MCF 10A (cell line): ENCODE measurements at regions of chr11 and their contacts with region 1.

Region 1: GRCh38 chr11:11028017-11028692 is 170.3 kb upstream of the ZBED5 start:
- DNase-seq: peak; percentile 74
- H3K4me3 Mint-ChIP-seq: no peak overlapping the region
- H3K27ac Mint-ChIP-seq: no peak overlapping the region
- H3K4me1 Mint-ChIP-seq: peaks cover 16% of the 10 kb centered on the region
- H3K27me3 Mint-ChIP-seq: no peaks in the 10 kb centered on the region
- CTCF ChIP-seq: peak; percentile 86

Region 2: DNA sequence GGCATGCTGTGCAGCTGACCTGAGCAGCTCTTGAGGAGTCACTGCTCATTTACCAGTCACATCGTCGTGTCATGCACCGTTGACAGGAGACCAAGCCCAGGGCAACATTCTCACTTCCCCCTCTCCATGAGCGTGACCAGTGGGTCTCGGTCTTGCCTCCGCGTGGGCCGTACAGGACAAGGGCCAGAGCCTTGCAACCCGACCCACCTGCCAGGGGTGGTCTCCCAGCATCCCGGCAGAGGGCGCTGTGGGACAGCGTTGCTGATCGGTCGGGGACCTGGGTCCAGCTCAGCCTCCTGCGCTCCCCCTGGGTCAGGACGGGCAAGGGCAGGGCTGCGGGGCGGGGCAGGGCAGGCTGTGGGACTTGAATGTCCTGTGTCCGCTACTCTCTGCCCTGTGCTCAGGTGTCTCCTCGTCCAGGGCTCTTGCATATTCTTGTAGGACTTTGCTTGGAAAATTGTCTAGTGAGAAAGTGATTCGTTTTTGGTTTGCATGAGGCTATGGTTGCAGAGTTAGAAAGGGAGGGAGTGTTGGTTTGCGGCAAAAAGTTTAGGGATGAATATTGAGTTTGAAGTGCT is 235.7 kb before region 1 on chr11:
- CTCF ChIA-PET with region 1: interaction called, 39 read pairs
- POLR2A ChIA-PET with region 1: interaction called, 4 read pairs
- intact Hi-C with region 1: no loop called
- DNase-seq: peak; percentile 88
- H3K4me3 Mint-ChIP-seq: no peak overlapping the region
- H3K27ac Mint-ChIP-seq: no peak overlapping the region
- H3K4me1 Mint-ChIP-seq: peaks cover 8% of the 10 kb centered on the region
- H3K27me3 Mint-ChIP-seq: no peaks in the 10 kb centered on the region
- CTCF ChIP-seq: peak; percentile 96

Region 3: DNA sequence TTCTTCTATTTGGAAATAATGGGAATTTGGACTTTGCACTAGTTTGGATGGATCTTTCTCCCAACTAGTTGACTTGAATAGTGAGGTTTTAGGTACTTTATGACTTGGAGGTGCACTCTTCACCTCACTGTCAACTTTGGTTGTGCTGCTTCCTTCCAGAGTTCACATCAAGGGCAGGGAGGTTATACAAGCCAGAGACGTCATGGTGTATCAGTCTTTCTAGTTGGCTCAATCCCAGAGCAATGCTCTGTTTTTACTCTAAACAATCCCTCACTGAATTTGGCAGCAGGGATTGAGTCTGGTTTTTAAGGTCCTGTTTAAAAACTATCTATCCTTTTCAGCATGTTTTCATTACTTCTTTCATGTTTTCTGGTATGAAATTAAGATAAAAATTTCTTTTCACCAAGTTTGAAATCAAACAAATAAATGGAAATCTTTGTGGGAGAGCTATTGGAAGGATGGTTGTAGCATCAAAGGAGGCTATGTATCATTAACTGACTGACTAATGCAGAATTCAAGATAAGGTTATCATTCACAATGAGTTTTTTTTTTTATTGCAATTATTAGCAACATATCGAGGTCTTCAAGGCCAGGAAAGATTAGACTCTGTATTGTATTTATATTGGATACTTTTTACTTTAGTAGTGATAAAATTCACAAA is 142.3 kb before region 1 on chr11:
- CTCF ChIA-PET with region 1: no interaction called
- POLR2A ChIA-PET with region 1: no interaction called
- intact Hi-C with region 1: no loop called
- DNase-seq: no peak
- H3K4me3 Mint-ChIP-seq: no peak overlapping the region
- H3K27ac Mint-ChIP-seq: no peak overlapping the region
- H3K4me1 Mint-ChIP-seq: no peaks in the 10 kb centered on the region
- H3K27me3 Mint-ChIP-seq: no peaks in the 10 kb centered on the region
- CTCF ChIP-seq: no peak

Region 4: GRCh38 chr11:11016068-11016467 is 12.1 kb before region 1 on chr11:
- CTCF ChIA-PET with region 1: interaction called, 11 read pairs
- POLR2A ChIA-PET with region 1: interaction called, 3 read pairs
- intact Hi-C with region 1: no loop called
- DNase-seq: no peak
- H3K4me3 Mint-ChIP-seq: no peak overlapping the region
- H3K27ac Mint-ChIP-seq: no peak overlapping the region
- H3K4me1 Mint-ChIP-seq: peaks cover 4% of the 10 kb centered on the region
- H3K27me3 Mint-ChIP-seq: peaks cover 7% of the 10 kb centered on the region
- CTCF ChIP-seq: no peak

Region 5: GRCh38 chr11:11157185-11157584 is 129.0 kb after region 1 on chr11:
- CTCF ChIA-PET with region 1: no interaction called
- POLR2A ChIA-PET with region 1: no interaction called
- intact Hi-C with region 1: loop called (anchors 10 kb)
- DNase-seq: peak; percentile 42
- H3K4me3 Mint-ChIP-seq: no peak overlapping the region
- H3K27ac Mint-ChIP-seq: no peak overlapping the region
- H3K4me1 Mint-ChIP-seq: no peaks in the 10 kb centered on the region
- H3K27me3 Mint-ChIP-seq: peaks cover 42% of the 10 kb centered on the region
- CTCF ChIP-seq: no peak

Region 6: DNA sequence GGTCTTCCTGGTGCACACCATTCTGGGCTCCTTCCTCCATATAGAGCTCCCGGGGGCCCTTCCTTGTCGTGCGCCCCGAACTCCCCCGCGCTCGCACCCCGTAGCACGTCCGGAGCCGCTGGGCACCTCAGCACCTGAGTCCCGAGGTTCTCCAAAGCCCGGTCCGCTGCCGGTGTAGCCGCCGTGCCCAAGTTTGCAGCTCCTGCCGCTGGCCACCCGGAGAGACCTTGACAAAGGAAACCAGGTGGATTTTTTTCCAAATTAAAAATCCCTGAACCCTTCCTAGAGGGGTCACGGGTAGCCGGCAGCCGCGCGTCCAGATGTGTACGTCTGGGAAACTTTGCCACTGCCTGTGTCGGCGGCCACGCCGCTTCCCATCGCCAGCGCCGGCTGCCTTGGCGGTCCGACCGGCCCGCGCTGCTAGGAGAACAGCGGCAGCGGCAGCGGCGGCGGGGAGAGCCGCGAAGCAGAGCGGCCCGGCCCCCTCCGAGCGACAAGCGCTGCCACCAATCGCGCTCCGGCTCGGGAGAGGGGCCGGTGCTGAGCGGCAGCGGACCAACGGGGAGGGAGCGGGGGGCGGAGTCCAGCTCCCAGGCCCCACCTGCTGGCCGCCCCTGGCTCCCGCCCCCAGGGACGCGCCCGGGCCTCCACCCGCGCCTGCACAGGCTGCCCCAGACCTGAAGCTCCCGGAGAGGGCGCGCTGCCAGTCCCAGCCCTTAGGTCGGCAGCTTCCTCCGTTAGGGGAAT is 593.6 kb after region 1 on chr11 and contains the start of gene GALNT18:
- CTCF ChIA-PET with region 1: interaction called, 8 read pairs
- POLR2A ChIA-PET with region 1: interaction called, 9 read pairs
- intact Hi-C with region 1: loop called (anchors 2 kb)
- DNase-seq: peak; percentile 95
- H3K4me3 Mint-ChIP-seq: peak within 1 kb of the TSS; percentile 90
- H3K27ac Mint-ChIP-seq: peak within 1 kb of the TSS; percentile 51
- H3K4me1 Mint-ChIP-seq: peaks cover 34% of the 10 kb centered on the region
- H3K27me3 Mint-ChIP-seq: no peaks in the 10 kb centered on the region
- CTCF ChIP-seq: peak; percentile 29
- total RNA-seq, gene GALNT18: 9.0 and 14.1 TPM in 2 replicates

Region 7: DNA sequence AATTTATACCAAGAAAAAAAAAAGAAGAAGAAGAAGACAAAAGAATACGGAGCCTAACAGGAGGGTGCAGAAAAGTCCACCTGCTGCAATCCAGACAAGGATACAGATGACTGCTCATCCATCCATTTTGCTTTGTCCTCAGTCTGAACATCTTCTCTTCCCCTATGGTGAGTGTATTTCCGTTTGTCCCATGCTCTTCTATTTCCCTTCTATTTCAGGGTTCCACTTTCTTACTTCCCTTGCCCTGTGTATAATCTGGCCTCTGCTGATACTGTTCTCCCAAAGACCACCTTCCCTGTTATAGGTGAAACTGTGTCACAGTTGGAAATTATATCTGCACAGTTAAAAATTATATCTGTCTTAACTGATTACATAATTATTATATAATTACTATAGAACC is 764.9 kb after region 1 on chr11:
- CTCF ChIA-PET with region 1: interaction called, 103 read pairs
- POLR2A ChIA-PET with region 1: interaction called, 16 read pairs
- intact Hi-C with region 1: no loop called
- DNase-seq: no peak
- H3K4me3 Mint-ChIP-seq: no peak overlapping the region
- H3K27ac Mint-ChIP-seq: no peak overlapping the region
- H3K4me1 Mint-ChIP-seq: no peaks in the 10 kb centered on the region
- H3K27me3 Mint-ChIP-seq: peaks cover 28% of the 10 kb centered on the region
- CTCF ChIP-seq: no peak